Activated T-helper 1 cell treated with anti-CD3 and anti-CD28 coated beads, Interleukin-12 subunit alpha, Interleukin-12 subunit beta, Interleukin-2, Interleukin-4 antibody, amounts not matched to agents 30 ng/mL and 10 ng/mL and 1 ng/mL, durations not matched to agents 14 hours and 24 hours and 36 hours (primary cell): ENCODE measurements at regions of chr19 and their contacts with region 1.

Region 1: GRCh38 chr19:35648017-35648961 is at the start of gene COX6B1:
- DNase-seq: peak; percentile 93
- H3K4me3 Mint-ChIP-seq: peak within 1 kb of the TSS; percentile 95
- H3K27ac Mint-ChIP-seq: peak within 1 kb of the TSS; percentile 89
- H3K4me1 Mint-ChIP-seq: peaks cover 25% of the 10 kb centered on the region
- H3K27me3 Mint-ChIP-seq: no peaks in the 10 kb centered on the region
- total RNA-seq, gene COX6B1: 434 and 451 TPM in 2 replicates

Region 2: GRCh38 chr19:35592226-35592625 is 56.1 kb before region 1 on chr19:
- intact Hi-C with region 1: no loop called
- DNase-seq: no peak
- H3K4me3 Mint-ChIP-seq: no peak overlapping the region
- H3K27ac Mint-ChIP-seq: no peak overlapping the region
- H3K4me1 Mint-ChIP-seq: peaks cover 10% of the 10 kb centered on the region
- H3K27me3 Mint-ChIP-seq: peaks cover 4% of the 10 kb centered on the region

Region 3: GRCh38 chr19:35612559-35613321 is 35.5 kb before region 1 on chr19 and contains the start of gene HAUS5:
- intact Hi-C with region 1: loop called (anchors 1 kb)
- DNase-seq: peak; percentile 96
- H3K4me3 Mint-ChIP-seq: peak within 1 kb of the TSS; percentile 87
- H3K27ac Mint-ChIP-seq: peak within 1 kb of the TSS; percentile 92
- H3K4me1 Mint-ChIP-seq: peaks cover 33% of the 10 kb centered on the region
- H3K27me3 Mint-ChIP-seq: peaks cover 3% of the 10 kb centered on the region
- total RNA-seq, gene HAUS5: 41.0 and 48.4 TPM in 2 replicates

Region 4: DNA sequence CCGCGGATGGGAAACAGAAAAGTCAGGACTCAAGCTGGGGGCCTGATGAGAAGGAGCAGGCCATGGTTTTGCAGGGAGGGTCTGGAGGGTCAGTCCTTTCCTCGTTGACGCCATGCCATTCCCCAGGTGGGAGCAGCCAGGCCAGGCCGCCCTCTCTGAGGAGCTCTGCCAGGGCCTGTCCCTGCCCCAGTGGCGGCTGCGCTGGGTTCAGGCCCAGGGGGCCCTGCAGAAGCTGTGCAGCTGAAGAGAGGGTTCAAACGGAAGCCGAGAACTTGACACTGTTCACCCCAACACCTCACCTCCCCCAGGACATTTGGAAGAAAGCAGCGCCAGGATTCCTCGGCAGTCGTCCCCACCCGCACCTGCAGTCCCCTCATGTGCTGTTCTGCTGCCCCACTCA is 25.5 kb before region 1 on chr19:
- intact Hi-C with region 1: no loop called
- DNase-seq: no peak
- H3K4me3 Mint-ChIP-seq: no peak overlapping the region
- H3K27ac Mint-ChIP-seq: no peak overlapping the region
- H3K4me1 Mint-ChIP-seq: no peaks in the 10 kb centered on the region
- H3K27me3 Mint-ChIP-seq: no peaks in the 10 kb centered on the region

Region 5: DNA sequence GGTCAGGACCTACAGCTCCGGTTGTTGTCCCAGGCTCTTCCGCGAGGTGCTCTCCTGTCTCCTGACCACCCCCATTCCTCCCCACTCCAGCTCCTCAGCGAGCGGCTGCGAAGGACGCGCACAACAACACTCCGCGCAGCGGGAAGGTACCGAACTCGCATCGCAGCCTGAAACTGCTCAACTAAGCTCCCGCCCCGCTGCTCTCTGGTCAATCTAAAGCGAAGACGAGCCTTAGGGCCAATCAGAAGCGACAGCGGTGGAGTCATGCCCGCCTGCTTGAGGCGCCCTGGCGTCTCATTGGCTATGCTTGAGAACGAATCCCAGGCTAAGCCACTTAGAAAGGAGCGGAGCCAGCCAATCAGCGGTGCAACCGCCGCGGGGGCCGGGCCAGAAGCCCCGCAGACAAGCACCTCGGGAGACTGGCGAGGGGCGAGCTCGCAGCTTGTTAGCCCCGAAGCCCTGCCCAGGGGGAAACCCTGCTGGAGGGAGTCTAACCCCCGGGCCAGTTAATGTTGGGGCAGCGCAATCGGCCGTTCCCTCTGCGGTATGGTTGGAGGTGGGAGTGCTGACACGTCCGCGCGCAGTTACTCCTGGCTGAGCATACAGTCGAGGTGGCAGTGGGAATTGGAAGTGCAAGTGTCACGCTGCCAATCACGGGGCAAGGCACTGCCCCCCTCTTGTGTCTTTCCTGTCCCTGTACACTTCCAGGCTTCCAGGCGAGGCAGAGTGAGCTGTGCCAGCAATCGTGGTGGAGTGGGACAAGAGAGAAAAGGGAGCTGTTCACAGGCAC is 54.1 kb after region 1 on chr19:
- intact Hi-C with region 1: loop called (anchors 2 kb)
- DNase-seq: peak; percentile 93
- H3K4me3 Mint-ChIP-seq: peak overlapping the region; percentile 95
- H3K27ac Mint-ChIP-seq: peak overlapping the region; percentile 97
- H3K4me1 Mint-ChIP-seq: peaks cover 18% of the 10 kb centered on the region
- H3K27me3 Mint-ChIP-seq: no peaks in the 10 kb centered on the region

Region 6: GRCh38 chr19:35748106-35749020 is 100.1 kb after region 1 on chr19 and contains the start of gene LIN37:
- intact Hi-C with region 1: loop called (anchors 1 kb)
- DNase-seq: peak; percentile 99
- H3K4me3 Mint-ChIP-seq: peak within 1 kb of the TSS; percentile 97
- H3K27ac Mint-ChIP-seq: peak within 1 kb of the TSS; percentile 89
- H3K4me1 Mint-ChIP-seq: peaks cover 43% of the 10 kb centered on the region
- H3K27me3 Mint-ChIP-seq: peaks cover 2% of the 10 kb centered on the region
- total RNA-seq, gene LIN37: 9.3 and 9.8 TPM in 2 replicates

Region 7: DNA sequence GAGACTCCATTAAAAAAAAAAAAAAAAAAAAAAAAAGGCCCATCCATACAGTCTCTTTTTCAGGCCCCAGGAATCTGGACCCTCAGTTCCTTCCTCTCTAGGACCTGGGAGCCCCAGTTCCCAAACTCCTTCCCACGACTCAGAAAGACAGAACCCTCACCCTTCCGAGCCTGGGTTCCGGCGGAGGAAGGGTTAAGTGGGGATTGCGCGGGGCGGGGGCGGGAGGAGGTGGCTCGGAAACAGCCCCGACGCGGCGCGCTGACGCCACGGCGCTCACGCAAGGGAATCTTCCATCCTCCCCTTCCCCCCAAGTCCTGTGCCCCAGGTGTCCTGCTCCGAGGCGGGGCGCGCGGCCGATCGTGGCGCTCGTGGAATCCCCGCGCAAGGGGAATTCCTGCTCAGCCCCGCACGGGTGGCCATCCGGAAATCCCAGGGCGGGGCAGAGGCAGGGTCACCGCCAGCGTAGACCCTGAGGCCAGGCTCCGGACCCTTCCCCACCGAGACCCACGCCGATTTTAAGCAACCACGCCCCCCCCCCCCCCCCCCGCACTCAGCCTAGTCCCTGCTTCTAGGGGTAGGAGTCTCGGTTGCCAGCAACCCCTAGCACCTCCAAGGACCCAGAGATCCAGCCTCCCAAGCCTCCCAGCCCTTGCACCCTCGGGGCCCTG is 251.4 kb after region 1 on chr19:
- intact Hi-C with region 1: loop called (anchors 5 kb)
- DNase-seq: peak; percentile 85
- H3K4me3 Mint-ChIP-seq: peak overlapping the region; percentile 97
- H3K27ac Mint-ChIP-seq: peak overlapping the region; percentile 98
- H3K4me1 Mint-ChIP-seq: peaks cover 42% of the 10 kb centered on the region
- H3K27me3 Mint-ChIP-seq: no peaks in the 10 kb centered on the region

Region 8: GRCh38 chr19:36114763-36115452 is 466.6 kb after region 1 on chr19 and contains the start of gene POLR2I:
- intact Hi-C with region 1: loop called (anchors 10 kb)
- DNase-seq: peak; percentile 98
- H3K4me3 Mint-ChIP-seq: peak within 1 kb of the TSS; percentile 98
- H3K27ac Mint-ChIP-seq: peak within 1 kb of the TSS; percentile 92
- H3K4me1 Mint-ChIP-seq: peaks cover 38% of the 10 kb centered on the region
- H3K27me3 Mint-ChIP-seq: peaks cover 1% of the 10 kb centered on the region
- total RNA-seq, gene POLR2I: 76.3 and 92.4 TPM in 2 replicates